Activated CD4-positive, alpha-beta memory T cell treated with anti-CD3 and anti-CD28 coated beads for 36 hours (primary cell): ENCODE measurements at regions of chr13 and their contacts with region 1.

Region 1: DNA sequence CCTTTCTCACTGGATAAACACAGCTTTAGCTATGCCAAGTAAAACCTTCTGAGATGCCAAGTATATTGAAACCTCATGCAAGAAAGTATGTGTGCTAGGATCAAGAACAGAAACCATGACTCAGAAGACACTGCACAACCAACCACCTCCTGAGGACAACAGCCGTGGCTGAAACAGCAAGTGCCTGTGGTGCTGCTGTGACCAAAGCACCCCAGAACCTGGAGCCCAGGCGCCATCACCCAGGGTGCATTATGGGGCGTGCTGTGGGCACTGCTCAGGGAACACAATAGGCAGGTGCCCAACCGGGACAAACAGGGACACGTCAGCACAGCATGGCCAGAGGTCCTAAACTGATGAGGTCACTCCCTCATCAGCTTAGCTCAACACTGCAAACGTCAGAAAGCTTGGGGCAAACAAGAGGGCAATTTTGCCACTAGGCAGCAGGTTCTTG is 101.3 kb upstream of the SLC15A1 start:
- DNase-seq: peak; percentile 87
- H3K4me3 Mint-ChIP-seq: no peak overlapping the region
- H3K27ac Mint-ChIP-seq: peak overlapping the region; percentile 46
- H3K4me1 Mint-ChIP-seq: peaks cover 12% of the 10 kb centered on the region
- H3K27me3 Mint-ChIP-seq: no peaks in the 10 kb centered on the region

Region 2: DNA sequence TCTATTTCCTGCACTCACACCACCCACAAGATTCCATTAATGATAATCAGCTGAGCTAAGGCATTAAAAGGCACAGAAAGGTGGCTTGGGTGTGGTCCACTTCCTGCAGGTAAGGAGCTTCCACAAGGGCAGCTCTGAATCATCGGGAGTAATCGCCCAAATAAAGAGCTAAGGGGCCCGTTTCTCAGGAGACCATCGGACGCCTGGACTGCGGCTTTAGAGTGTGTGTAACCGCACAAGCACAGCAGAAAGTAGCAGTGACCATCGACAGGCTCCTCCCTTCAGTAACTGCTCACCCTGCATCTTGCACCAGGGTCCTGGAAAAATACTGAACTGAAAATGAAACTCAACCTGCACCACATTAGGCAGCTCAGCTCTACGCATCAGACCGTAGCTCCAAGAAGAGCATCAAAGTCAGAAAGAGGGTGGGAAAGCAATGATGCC is 282.8 kb before region 1 on chr13:
- CTCF ChIA-PET with region 1: no interaction called
- POLR2A ChIA-PET with region 1: no interaction called
- intact Hi-C with region 1: loop called (anchors 5 kb)
- DNase-seq: peak; percentile 67
- H3K4me3 Mint-ChIP-seq: peak overlapping the region; percentile 75
- H3K27ac Mint-ChIP-seq: peak overlapping the region; percentile 98
- H3K4me1 Mint-ChIP-seq: peaks cover 89% of the 10 kb centered on the region
- H3K27me3 Mint-ChIP-seq: no peaks in the 10 kb centered on the region

Region 3: DNA sequence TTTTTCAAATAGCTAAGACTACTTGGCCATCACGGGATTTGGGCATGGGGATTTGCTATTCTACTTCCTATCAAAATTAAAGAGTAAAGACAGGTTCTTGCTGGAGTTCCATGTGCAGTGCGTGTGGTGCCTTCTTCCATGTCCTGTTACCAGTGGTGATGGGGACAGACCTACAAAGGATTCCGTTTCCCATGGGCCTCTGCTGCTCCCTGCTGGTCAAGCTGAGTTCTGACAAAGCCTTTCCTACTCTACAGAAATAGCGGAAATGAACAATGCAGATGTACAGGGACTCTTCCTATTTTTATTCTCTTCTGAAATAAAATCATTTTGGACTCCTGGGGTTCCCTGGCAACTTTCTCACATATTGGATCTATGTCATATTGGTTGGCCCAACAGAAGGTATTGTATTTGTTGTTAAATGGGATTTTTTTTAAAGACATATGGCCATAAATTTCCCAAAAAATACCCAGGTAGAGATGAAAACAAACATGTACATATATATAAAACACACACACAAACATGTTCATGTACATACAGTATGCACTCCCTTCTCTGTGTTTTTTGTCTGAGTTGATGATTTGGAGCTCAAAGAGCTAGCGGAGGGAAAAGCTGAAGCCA is 10.8 kb before region 1 on chr13:
- CTCF ChIA-PET with region 1: interaction called, 14 read pairs
- POLR2A ChIA-PET with region 1: no interaction called
- intact Hi-C with region 1: no loop called
- DNase-seq: peak; percentile 79
- H3K4me3 Mint-ChIP-seq: no peak overlapping the region
- H3K27ac Mint-ChIP-seq: no peak overlapping the region
- H3K4me1 Mint-ChIP-seq: no peaks in the 10 kb centered on the region
- H3K27me3 Mint-ChIP-seq: no peaks in the 10 kb centered on the region

Region 4: DNA sequence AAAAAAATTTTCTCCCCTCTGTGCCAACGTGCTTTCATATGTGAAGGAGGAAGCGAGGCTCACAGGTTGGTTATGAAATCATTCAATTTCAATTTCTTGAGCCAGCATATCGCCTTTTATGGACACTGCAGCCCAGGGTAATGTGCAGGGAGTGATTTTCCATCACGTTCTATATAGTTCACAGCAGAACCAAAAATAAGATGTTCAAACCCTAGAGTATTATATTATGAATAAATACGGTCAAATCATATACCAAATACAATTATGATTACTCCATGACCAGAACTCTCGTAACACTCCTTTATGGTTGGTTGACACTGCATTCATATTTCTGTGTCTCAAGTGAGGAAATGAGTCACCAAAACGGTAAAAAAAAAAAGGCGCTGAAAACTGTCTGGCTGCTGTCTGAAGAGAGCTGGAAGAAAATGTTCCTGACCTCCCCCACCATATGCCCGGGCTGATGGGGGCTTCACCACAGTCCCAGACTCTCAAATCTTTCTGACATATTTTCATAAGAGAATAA is 271.1 kb after region 1 on chr13:
- CTCF ChIA-PET with region 1: no interaction called
- POLR2A ChIA-PET with region 1: interaction called, 3 read pairs
- intact Hi-C with region 1: loop called (anchors 1 kb)
- DNase-seq: peak; percentile 38
- H3K4me3 Mint-ChIP-seq: peak overlapping the region; percentile 58
- H3K27ac Mint-ChIP-seq: peak overlapping the region; percentile 71
- H3K4me1 Mint-ChIP-seq: peaks cover 45% of the 10 kb centered on the region
- H3K27me3 Mint-ChIP-seq: peaks cover 2% of the 10 kb centered on the region